ENCODE measurements at regions of chr2 and their contacts with region 1.

Region 1: DNA sequence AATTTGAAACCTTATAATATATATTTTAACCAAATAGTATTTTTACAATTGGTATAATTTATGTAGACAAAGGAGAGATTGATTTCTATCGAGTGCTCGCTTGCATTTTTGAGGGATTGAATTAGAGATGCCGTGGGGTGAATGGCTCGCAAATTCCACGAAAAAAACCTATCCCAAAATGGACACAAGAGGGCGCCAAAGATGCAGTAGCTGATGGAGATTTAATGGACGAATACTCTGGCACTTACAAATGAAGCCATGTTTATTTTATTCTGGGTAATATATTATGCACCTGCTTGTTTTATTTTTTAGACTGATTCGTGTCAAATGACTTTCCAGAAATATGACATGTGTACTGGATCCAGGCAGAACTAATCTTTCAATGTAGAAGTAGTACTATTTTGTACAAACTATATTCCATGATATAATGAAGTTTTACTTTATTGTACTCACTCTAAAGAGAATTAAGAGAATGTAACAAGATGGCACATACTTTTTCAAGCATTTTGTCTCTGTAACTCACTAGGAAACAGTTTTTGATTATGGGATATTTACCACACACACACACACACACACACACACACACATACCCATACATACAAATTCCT is 505.4 kb downstream of the PLCL1 start:
- DNase-seq: no peak
- ATAC-seq: no peak
- H3K4me3 ChIP-seq: no peak overlapping the region
- H3K27ac ChIP-seq: no peak overlapping the region
- H3K4me1 ChIP-seq: no peaks in the 10 kb centered on the region
- H3K27me3 ChIP-seq: peaks cover 10% of the 10 kb centered on the region
- CTCF ChIP-seq: peak; percentile 89

Region 2: GRCh38 chr2:198657512-198658121 is 347.8 kb after region 1 on chr2:
- CTCF ChIA-PET with region 1: no interaction called
- POLR2A ChIA-PET with region 1: no interaction called
- in situ Hi-C with region 1: no loop called
- intact Hi-C with region 1: loop called (anchors 10 kb)
- DNase-seq: peak; percentile 5
- ATAC-seq: no peak
- H3K4me3 ChIP-seq: no peak overlapping the region
- H3K27ac ChIP-seq: no peak overlapping the region
- H3K4me1 ChIP-seq: no peaks in the 10 kb centered on the region
- H3K27me3 ChIP-seq: no peaks in the 10 kb centered on the region
- CTCF ChIP-seq: peak; percentile 56; the same call in 1 of the 2 replicates

Region 3: GRCh38 chr2:199602271-199602895 is 1292.6 kb after region 1 on chr2:
- CTCF ChIA-PET with region 1: no interaction called
- POLR2A ChIA-PET with region 1: no interaction called
- in situ Hi-C with region 1: no loop called
- intact Hi-C with region 1: loop called (anchors 10 kb)
- DNase-seq: no peak
- ATAC-seq: peak; percentile 56; the same call in 1 of the 2 replicates
- H3K4me3 ChIP-seq: no peak overlapping the region
- H3K27ac ChIP-seq: no peak overlapping the region
- H3K4me1 ChIP-seq: no peaks in the 10 kb centered on the region
- H3K27me3 ChIP-seq: peaks cover 10% of the 10 kb centered on the region
- CTCF ChIP-seq: peak; percentile 31; the same call in 1 of the 2 replicates

Region 4: DNA sequence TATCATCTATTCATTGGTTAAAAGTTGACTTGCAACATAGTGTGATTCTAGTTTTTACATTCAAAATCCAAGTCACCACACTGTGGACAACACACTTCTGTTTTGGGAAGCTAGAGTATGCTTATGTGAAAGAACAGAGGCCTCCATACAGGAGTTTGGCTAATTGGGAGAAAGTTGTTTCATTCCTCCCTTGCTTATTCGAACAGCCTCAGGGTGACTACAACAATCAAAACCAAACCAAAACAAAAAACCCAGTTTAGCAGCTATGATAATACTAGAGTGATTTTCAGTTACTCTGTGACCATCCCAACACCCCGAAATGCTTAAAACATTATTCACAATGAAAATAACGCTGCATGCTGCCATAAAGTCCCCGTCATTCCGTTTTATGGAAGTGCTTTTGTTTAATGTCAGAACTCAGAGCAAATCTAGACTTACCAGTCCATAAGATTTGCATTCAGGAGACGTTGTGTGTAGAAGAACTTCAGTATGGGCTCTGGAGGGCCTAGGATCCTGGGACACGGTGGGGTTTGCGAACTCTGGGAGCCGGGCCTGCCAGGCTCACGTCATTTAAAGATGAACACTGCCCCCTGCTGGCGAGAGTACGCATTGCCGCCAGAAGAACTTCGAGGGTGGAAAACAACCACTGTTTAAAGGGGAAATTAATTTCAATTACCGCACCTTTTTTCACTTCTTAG is 1429.8 kb after region 1 on chr2:
- CTCF ChIA-PET with region 1: no interaction called
- POLR2A ChIA-PET with region 1: no interaction called
- in situ Hi-C with region 1: no loop called
- intact Hi-C with region 1: loop called (anchors 2 kb)
- DNase-seq: peak; percentile 24
- ATAC-seq: peak; percentile 79
- H3K4me3 ChIP-seq: no peak overlapping the region
- H3K27ac ChIP-seq: no peak overlapping the region
- H3K4me1 ChIP-seq: no peaks in the 10 kb centered on the region
- H3K27me3 ChIP-seq: peaks cover 13% of the 10 kb centered on the region
- CTCF ChIP-seq: peak; percentile 90

Measured in Panc1 (cell line).